Activated naive CD4-positive, alpha-beta T cell treated with anti-CD3 and anti-CD28 coated beads for 36 hours (primary cell): ENCODE measurements at regions of chr10 and their contacts with region 1.

Region 1: GRCh38 chr10:68901104-68901927 is at the start of gene DDX50:
- DNase-seq: peak; percentile 99
- H3K4me3 Mint-ChIP-seq: peak within 1 kb of the TSS; percentile 93
- H3K27ac Mint-ChIP-seq: peak within 1 kb of the TSS; percentile 97
- H3K4me1 Mint-ChIP-seq: peaks cover 40% of the 10 kb centered on the region
- H3K27me3 Mint-ChIP-seq: no peaks in the 10 kb centered on the region
- total RNA-seq, gene DDX50: 62.1 to 66.0 TPM

Region 2: GRCh38 chr10:67884313-67884841 is 1016.9 kb before region 1 on chr10 and contains the start of gene SIRT1:
- CTCF ChIA-PET with region 1: no interaction called
- intact Hi-C with region 1: loop called (anchors 10 kb)
- DNase-seq: peak; percentile 88
- H3K4me3 Mint-ChIP-seq: peak within 1 kb of the TSS; percentile 90
- H3K27ac Mint-ChIP-seq: peak within 1 kb of the TSS; percentile 89
- H3K4me1 Mint-ChIP-seq: peaks cover 25% of the 10 kb centered on the region
- H3K27me3 Mint-ChIP-seq: no peaks in the 10 kb centered on the region
- total RNA-seq, gene SIRT1: 18.7 to 18.8 TPM

Region 3: DNA sequence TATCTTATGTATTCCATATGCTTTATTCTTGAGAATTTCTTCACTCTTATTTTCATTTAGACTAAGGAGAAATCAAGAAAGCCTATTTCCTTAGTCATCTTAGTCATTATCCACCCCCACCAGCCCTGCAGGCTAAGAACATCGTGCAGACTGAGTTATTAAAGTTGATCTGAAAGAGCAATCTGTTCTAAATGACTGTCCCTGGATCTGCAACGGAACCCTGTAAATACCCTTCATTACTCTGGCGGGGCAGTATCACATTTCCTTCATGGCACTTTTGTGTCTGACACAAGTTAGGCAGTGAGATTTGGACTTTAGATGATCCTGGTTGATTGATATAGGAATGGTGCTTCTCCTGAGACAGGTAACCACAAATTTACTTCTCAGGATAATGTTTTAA is 795.5 kb before region 1 on chr10:
- CTCF ChIA-PET with region 1: no interaction called
- intact Hi-C with region 1: no loop called
- DNase-seq: no peak
- H3K4me3 Mint-ChIP-seq: no peak overlapping the region
- H3K27ac Mint-ChIP-seq: no peak overlapping the region
- H3K4me1 Mint-ChIP-seq: no peaks in the 10 kb centered on the region
- H3K27me3 Mint-ChIP-seq: peaks cover 3% of the 10 kb centered on the region

Region 4: GRCh38 chr10:68331455-68332258 is 569.7 kb before region 1 on chr10 and contains the start of gene HNRNPH3:
- CTCF ChIA-PET with region 1: no interaction called
- intact Hi-C with region 1: loop called (anchors 1 kb)
- DNase-seq: peak; percentile 99
- H3K4me3 Mint-ChIP-seq: peak within 1 kb of the TSS; percentile 100
- H3K27ac Mint-ChIP-seq: peak within 1 kb of the TSS; percentile 100
- H3K4me1 Mint-ChIP-seq: peaks cover 40% of the 10 kb centered on the region
- H3K27me3 Mint-ChIP-seq: no peaks in the 10 kb centered on the region
- total RNA-seq, gene HNRNPH3: 145 to 150 TPM

Region 5: DNA sequence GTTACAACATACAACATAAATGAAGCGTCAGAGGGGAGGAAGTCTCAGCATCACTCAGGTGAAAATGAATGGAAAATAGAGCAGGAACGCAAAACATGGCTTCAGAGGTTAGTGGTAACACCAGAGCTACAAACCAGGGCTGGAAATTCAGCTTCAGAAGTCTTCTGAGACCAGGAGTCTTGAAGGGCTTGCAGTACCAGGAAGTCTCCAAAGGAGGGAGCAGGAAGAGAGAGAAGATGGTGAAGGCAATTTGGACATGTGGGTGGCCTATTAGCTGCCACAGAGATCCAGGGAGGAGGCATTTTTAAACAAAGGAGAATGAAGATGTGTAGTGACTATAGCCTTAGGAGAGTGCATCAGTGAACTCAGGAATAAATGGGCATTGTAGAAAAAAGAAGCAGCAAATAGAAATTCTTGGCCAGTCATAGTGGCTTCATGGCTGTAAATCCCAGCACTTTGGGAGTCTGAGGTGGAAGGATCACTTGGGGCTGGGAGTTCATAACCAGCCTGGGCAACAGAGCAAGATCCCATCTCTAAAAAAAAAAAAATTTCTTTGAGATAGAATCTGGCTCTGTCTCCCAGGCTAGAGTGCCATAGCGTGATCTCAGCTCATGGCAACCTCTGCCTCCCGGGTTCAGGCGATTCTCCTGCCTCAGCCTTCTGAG is 350.4 kb before region 1 on chr10:
- CTCF ChIA-PET with region 1: interaction called, 3 read pairs
- intact Hi-C with region 1: loop called (anchors 1 kb)
- DNase-seq: peak; percentile 69
- H3K4me3 Mint-ChIP-seq: no peak overlapping the region
- H3K27ac Mint-ChIP-seq: no peak overlapping the region
- H3K4me1 Mint-ChIP-seq: no peaks in the 10 kb centered on the region
- H3K27me3 Mint-ChIP-seq: no peaks in the 10 kb centered on the region

Region 6: GRCh38 chr10:68826764-68827591 is 74.3 kb before region 1 on chr10 and contains the start of gene STOX1:
- CTCF ChIA-PET with region 1: interaction called, 7 read pairs
- intact Hi-C with region 1: loop called (anchors 1 kb)
- DNase-seq: peak; percentile 56
- H3K4me3 Mint-ChIP-seq: peak within 1 kb of the TSS; percentile 75
- H3K27ac Mint-ChIP-seq: no peak within 1 kb of the TSS
- H3K4me1 Mint-ChIP-seq: peaks cover 13% of the 10 kb centered on the region
- H3K27me3 Mint-ChIP-seq: peaks cover 2% of the 10 kb centered on the region
- total RNA-seq, gene STOX1: 0.38 to 0.42 TPM

Region 7: DNA sequence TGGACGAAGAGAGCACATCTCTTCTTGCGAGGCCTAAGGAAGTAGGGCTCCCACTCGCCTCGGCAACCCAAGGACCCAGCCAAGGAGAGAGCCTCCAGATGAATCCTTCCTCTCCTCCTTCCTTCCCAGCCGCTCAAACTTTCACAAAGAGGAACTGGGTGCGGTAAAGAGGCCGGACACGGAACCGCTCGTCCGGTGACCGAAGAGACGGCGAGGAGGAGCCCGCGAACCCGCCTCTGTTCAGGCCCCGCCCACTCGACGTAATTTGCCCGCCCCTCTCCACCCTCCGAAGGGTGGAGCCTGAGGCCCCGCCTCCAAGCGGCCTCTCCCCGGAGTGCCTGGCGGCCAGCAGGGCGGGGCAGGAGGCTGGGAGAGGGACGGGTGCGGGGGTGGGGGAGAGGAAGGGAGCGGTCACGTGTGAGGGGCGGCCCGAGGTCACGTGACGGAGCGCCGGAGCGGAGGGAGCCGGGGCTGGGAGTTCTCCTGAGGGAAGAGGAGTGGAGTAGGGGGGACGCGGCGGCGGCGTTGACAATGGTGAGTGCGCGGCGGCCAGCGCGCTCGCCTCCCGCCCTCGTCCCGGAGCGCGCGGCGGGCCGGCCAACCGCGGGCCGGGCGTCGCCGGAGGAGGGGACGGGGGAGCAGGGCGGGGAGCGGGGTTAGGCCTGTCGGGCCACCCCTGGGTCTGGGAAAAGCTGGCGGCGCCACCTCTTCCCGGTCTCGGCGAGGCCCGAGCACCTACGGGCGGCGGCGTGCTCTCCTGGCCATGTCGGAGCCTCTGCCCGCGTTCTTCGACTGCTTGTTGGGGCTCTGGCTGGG is 222.6 kb after region 1 on chr10 and contains the start of gene VPS26A:
- CTCF ChIA-PET with region 1: no interaction called
- intact Hi-C with region 1: loop called (anchors 1 kb)
- DNase-seq: peak; percentile 99
- H3K4me3 Mint-ChIP-seq: peak within 1 kb of the TSS; percentile 95
- H3K27ac Mint-ChIP-seq: peak within 1 kb of the TSS; percentile 93
- H3K4me1 Mint-ChIP-seq: peaks cover 38% of the 10 kb centered on the region
- H3K27me3 Mint-ChIP-seq: no peaks in the 10 kb centered on the region
- total RNA-seq, gene VPS26A: 26.2 to 27.9 TPM